Naive thymus-derived CD4-positive, alpha-beta T cell (primary cell): ENCODE measurements at regions of chr19 and their contacts with region 1.

Region 1: GRCh38 chr19:35592226-35592625 is 6.3 kb downstream of the PMIS2 start:
- DNase-seq: peak in 5 of 9 donors; percentile 22 to 44 (median 35)
- ATAC-seq: no peak
- H3K4me3 ChIP-seq: no peak overlapping the region
- H3K4me3 Mint-ChIP-seq: no peak overlapping the region
- H3K27ac ChIP-seq: no peak overlapping the region
- H3K27ac Mint-ChIP-seq: no peak overlapping the region
- H3K4me1 ChIP-seq: no peaks in the 10 kb centered on the region
- H3K4me1 Mint-ChIP-seq: peaks cover 0 to 10% (median 3%) of the 10 kb centered on the region in 7 donors
- H3K27me3 ChIP-seq: no peaks in the 10 kb centered on the region
- H3K27me3 Mint-ChIP-seq: peaks cover 0 to 9% (median 5%) of the 10 kb centered on the region in 5 donors

Region 2: GRCh38 chr19:35509861-35510625 is 82.2 kb before region 1 on chr19:
- CTCF ChIA-PET with region 1: interaction called, 6 read pairs
- POLR2A ChIA-PET with region 1: no interaction called
- intact Hi-C with region 1: loop called in 1 of 2 experiments (anchors 1 kb)
- DNase-seq: peak; percentile 34 to 80 (median 58)
- ATAC-seq: peak; percentile 83
- H3K4me3 ChIP-seq: peak overlapping the region; percentile 53
- H3K4me3 Mint-ChIP-seq: peak overlapping the region; percentile 28 to 84 (median 76)
- H3K27ac ChIP-seq: no peak overlapping the region
- H3K27ac Mint-ChIP-seq: peak overlapping the region in 3 of 9 donors; percentile 20 to 61 (median 46)
- H3K4me1 ChIP-seq: peaks cover 12 to 17% of the 10 kb centered on the region in 2 donors
- H3K4me1 Mint-ChIP-seq: peaks cover 9 to 21% (median 14%) of the 10 kb centered on the region in 7 donors
- H3K27me3 ChIP-seq: peaks cover 0 to 4% of the 10 kb centered on the region in 2 donors
- H3K27me3 Mint-ChIP-seq: peaks cover 0 to 70% (median 14%) of the 10 kb centered on the region in 5 donors

Region 3: DNA sequence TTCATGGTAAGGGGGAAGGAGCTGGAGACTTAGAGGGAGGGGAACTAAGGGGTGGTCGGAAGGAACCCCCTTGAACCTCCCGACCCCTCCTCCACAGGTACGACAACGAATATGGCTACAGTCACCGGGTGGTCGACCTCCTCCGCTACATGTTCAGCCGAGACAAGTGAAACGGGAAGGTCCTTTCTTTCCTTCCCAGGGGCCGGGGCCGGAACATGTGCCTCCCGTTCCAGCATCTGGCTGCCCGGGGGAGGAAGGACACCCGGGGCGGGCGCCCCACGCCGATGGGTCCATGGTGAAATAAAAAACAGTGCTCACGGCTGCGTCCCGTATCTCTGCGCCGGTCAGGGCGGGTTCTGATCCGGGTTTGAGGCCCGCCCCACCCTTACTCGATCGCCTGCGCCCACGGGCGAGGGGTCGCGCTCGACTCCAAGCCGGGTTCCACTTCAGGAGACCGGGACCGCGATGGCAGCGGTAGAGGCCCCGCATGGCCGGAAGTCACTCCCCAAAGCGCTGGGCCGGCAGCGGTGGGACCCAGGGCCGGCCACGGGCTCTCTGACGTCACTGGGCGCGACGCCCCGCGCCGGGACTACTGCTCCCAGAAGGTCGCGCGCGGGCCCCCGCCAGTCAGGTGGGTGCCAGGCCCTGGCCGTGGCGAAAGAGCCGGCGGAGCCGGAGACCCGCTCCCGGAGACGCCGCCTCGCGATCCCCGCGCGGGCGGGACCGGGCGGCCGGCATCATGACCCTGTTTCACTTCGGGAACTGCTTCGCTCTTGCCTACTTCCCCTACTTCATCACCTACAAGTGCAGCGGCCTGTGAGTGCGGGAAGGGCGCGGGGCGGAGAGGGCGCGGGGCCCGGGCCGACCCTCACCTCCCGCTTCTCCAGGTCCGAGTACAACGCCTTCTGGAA is 47.0 kb before region 1 on chr19 and contains the start of gene TMEM147:
- CTCF ChIA-PET with region 1: interaction called, 5 read pairs
- POLR2A ChIA-PET with region 1: no interaction called
- intact Hi-C with region 1: loop called (anchors 1 to 5 kb)
- DNase-seq: peak; percentile 60 to 90 (median 69)
- ATAC-seq: peak; percentile 91
- H3K4me3 ChIP-seq: peak within 1 kb of the TSS; percentile 78
- H3K4me3 Mint-ChIP-seq: peak within 1 kb of the TSS; percentile 79 to 93 (median 89)
- H3K27ac ChIP-seq: peak within 1 kb of the TSS; percentile 84
- H3K27ac Mint-ChIP-seq: peak within 1 kb of the TSS; percentile 52 to 96 (median 90)
- H3K4me1 ChIP-seq: peaks cover 13 to 16% of the 10 kb centered on the region in 2 donors
- H3K4me1 Mint-ChIP-seq: peaks cover 27 to 41% (median 38%) of the 10 kb centered on the region in 7 donors
- H3K27me3 ChIP-seq: no peaks in the 10 kb centered on the region
- H3K27me3 Mint-ChIP-seq: no peaks in the 10 kb centered on the region
- total RNA-seq, gene TMEM147: 24.7 to 54.0 (median 34.6) TPM

Region 4: DNA sequence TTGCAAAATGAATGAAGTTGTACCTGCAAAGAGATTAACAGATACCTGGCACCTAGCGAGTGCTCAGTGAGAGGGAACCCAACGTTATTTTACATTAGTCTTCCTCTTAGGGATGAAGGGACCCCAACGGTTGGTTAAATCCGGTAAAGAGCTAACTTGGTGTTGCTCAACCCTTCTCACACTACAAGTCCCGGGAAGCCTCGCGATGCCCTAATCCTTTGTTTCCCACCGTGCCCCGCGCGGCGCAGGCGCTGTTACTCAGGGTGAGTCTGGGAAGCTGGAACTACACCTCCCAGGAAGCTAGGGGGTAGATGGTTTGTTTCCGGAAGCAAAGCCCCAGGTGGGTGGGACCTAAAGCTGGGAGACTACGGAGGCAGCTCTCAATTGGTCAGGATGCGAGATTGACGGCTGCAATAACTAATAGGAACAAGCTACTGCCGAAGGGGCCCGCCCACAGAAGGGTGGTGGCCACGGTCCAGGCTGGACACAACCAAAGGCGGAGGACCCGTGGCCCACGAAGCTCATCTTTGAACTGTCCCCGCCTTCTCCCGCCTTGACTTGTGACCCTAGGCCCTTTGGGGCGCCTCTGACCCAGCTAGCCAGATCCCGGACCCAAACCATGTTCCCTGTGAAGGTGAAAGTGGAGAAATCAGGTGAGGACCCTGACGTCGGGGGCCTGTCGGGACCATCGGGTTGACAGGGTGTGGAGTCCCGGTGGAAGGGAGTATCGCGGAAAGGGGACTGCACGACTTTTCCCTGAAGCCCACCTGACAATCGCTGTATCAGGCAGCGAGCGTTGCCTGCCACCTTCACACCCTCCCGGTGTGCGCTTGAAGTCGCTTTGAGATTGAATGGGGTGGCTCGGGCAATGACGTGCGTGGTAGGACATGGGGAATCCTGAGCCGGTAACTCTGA is 156.1 kb after region 1 on chr19 and contains the start of gene LIN37:
- CTCF ChIA-PET with region 1: no interaction called
- POLR2A ChIA-PET with region 1: no interaction called
- intact Hi-C with region 1: no loop called
- DNase-seq: peak; percentile 91 to 100 (median 99)
- ATAC-seq: peak; percentile 83
- H3K4me3 ChIP-seq: peak within 1 kb of the TSS; percentile 95
- H3K4me3 Mint-ChIP-seq: peak within 1 kb of the TSS; percentile 90 to 100 (median 98)
- H3K27ac ChIP-seq: peak within 1 kb of the TSS; percentile 85
- H3K27ac Mint-ChIP-seq: peak within 1 kb of the TSS; percentile 89 to 97 (median 95)
- H3K4me1 ChIP-seq: peaks cover 28 to 30% of the 10 kb centered on the region in 2 donors
- H3K4me1 Mint-ChIP-seq: peaks cover 14 to 56% (median 43%) of the 10 kb centered on the region in 7 donors
- H3K27me3 ChIP-seq: no peaks in the 10 kb centered on the region
- H3K27me3 Mint-ChIP-seq: peaks cover 0 to 2% (median 0%) of the 10 kb centered on the region in 5 donors
- total RNA-seq, gene LIN37: 7.9 to 33.1 (median 18.9) TPM